Caco-2 (cell line): ENCODE measurements at regions of chr1 and their contacts with region 1.

Region 1: DNA sequence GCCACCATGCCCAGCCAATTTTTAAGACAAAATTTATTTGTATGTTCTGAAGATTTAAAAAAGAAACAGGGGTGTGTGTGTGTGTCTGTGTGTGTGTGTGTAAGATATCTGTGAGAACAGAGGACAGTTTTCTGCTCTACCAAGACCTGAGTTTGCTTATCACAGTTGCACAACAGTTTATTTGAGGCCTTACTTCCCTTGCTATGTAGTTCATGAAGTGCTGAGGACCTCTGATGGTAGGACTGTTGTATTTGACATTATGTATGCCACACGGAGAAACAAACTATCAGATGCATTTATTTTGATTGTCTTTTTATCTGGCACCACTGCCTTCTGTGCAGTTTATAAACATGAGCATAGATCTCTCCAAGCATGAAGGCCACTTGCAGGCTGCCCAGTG is 355.2 kb downstream of the PBX1 start:
- DNase-seq: peak in 1 of 2 experiments; percentile 39
- H3K4me3 ChIP-seq: no peak overlapping the region
- H3K4me3 Mint-ChIP-seq: no peak overlapping the region
- H3K27ac Mint-ChIP-seq: no peak overlapping the region
- H3K4me1 ChIP-seq: no peaks in the 10 kb centered on the region
- H3K4me1 Mint-ChIP-seq: no peaks in the 10 kb centered on the region
- H3K27me3 ChIP-seq: no peaks in the 10 kb centered on the region; the same call in 1 of the 2 replicates
- H3K27me3 Mint-ChIP-seq: peaks cover 6% of the 10 kb centered on the region
- CTCF ChIP-seq: peak; percentile 17 to 32

Region 2: DNA sequence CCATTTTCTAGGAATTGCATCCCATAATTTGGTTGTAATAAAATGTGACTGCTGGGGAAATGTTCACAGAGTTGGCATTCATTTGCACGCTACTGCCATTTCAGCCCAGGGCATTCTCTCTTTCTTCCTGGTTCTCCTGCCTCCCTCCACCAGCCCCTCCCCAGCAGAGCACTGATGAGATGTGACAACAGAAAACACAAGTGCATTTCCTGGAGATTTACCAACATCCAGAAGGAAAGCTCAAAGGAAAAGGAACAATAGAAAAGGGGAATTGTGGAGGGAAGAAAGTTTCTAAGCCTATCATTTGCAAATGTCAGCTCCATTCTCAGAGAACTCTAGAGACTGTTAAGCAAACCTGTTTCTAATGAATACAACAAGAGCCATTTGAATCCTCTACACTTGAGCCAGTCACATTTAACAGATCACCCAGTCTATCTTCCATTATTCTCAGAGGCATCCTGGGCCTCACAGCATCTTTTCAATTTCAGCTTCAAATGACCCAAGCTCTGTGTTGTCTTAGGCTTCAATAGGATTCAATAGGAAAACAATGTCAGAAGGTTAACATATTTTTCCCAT is 750.8 kb before region 1 on chr1:
- CTCF ChIA-PET with region 1: no interaction called
- POLR2A ChIA-PET with region 1: no interaction called
- intact Hi-C with region 1: loop called (anchors 5 kb)
- DNase-seq: no peak
- H3K4me3 ChIP-seq: no peak overlapping the region
- H3K4me3 Mint-ChIP-seq: no peak overlapping the region
- H3K27ac Mint-ChIP-seq: no peak overlapping the region
- H3K4me1 ChIP-seq: no peaks in the 10 kb centered on the region
- H3K4me1 Mint-ChIP-seq: no peaks in the 10 kb centered on the region
- H3K27me3 ChIP-seq: no peaks in the 10 kb centered on the region; the same call in 1 of the 2 replicates
- H3K27me3 Mint-ChIP-seq: peaks cover 15% of the 10 kb centered on the region
- CTCF ChIP-seq: no peak

Region 3: DNA sequence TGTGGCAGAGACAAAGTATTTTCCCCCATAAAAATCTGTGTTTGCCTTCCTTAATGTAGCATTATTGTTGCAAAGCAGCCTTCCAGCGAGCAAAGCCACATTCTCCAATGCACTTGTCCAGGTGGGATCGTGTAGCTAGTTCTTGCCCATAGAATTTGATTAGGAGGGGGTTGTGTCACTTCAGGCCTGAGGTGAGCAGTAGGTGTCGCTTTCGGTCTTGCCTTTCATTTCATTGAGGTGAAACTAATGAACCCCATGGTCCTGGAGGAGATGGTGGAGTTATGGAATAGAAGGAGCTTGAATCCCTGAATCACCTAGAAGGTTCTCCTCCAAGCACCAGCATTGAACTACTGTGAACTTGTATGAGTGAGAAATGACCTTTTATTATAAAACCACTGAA is 674.1 kb before region 1 on chr1:
- CTCF ChIA-PET with region 1: no interaction called
- POLR2A ChIA-PET with region 1: no interaction called
- intact Hi-C with region 1: loop called (anchors 1 kb)
- DNase-seq: peak; percentile 56 to 69
- H3K4me3 ChIP-seq: no peak overlapping the region
- H3K4me3 Mint-ChIP-seq: no peak overlapping the region
- H3K27ac Mint-ChIP-seq: no peak overlapping the region
- H3K4me1 ChIP-seq: no peaks in the 10 kb centered on the region
- H3K4me1 Mint-ChIP-seq: no peaks in the 10 kb centered on the region
- H3K27me3 ChIP-seq: no peaks in the 10 kb centered on the region
- H3K27me3 Mint-ChIP-seq: peaks cover 10% of the 10 kb centered on the region
- CTCF ChIP-seq: peak; percentile 48 to 64

Region 4: DNA sequence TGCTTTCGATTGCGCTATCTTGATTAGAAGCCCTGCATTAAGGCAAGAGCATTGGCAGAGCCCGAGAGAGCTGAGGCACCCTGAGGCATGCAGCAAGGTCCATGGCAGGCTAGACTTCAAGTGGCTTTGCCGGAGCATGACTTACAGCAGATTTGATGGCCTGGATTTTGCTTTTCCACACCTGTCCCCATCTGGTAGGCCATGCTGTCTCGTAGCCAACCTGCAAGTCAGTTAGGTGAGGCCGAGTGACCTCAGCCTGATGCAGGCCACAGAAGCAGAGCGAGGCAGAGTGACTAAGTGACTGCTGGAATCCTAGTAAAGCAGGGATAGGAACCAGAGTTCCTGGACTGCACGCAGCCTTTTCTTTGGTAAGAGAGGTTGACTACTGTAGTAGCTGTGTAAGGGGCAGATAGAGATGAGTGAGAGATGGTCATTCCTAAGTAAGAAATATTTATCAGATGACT is 206.3 kb before region 1 on chr1:
- CTCF ChIA-PET with region 1: no interaction called
- POLR2A ChIA-PET with region 1: no interaction called
- intact Hi-C with region 1: loop called (anchors 5 kb)
- DNase-seq: no peak
- H3K4me3 ChIP-seq: no peak overlapping the region
- H3K4me3 Mint-ChIP-seq: no peak overlapping the region
- H3K27ac Mint-ChIP-seq: no peak overlapping the region
- H3K4me1 ChIP-seq: peaks cover 19% of the 10 kb centered on the region
- H3K4me1 Mint-ChIP-seq: peaks cover 16% of the 10 kb centered on the region
- H3K27me3 ChIP-seq: no peaks in the 10 kb centered on the region
- H3K27me3 Mint-ChIP-seq: no peaks in the 10 kb centered on the region
- CTCF ChIP-seq: no peak

Region 5: DNA sequence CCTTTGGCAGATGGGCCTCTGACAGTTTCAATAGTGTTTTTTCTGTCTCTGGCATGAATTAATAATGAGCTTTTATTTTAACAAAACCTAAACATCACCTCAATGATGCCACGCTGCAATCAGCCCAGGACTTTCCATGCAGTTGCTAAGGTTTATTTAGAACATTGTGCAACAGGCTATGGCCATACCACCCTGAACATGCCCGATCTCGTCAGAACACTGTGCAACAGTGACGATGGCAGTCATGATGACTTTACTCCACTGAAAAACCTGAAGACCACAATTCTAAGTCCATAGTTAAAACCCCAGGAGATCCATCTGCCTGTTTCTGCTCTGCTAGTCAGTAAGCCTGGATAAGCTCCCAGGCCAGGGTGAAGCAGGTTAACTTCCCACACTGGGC is 45.2 kb before region 1 on chr1:
- CTCF ChIA-PET with region 1: no interaction called
- POLR2A ChIA-PET with region 1: no interaction called
- intact Hi-C with region 1: no loop called
- DNase-seq: no peak
- H3K4me3 ChIP-seq: no peak overlapping the region
- H3K4me3 Mint-ChIP-seq: no peak overlapping the region
- H3K27ac Mint-ChIP-seq: no peak overlapping the region
- H3K4me1 ChIP-seq: no peaks in the 10 kb centered on the region
- H3K4me1 Mint-ChIP-seq: no peaks in the 10 kb centered on the region
- H3K27me3 ChIP-seq: no peaks in the 10 kb centered on the region
- H3K27me3 Mint-ChIP-seq: no peaks in the 10 kb centered on the region
- CTCF ChIP-seq: no peak

Region 6: DNA sequence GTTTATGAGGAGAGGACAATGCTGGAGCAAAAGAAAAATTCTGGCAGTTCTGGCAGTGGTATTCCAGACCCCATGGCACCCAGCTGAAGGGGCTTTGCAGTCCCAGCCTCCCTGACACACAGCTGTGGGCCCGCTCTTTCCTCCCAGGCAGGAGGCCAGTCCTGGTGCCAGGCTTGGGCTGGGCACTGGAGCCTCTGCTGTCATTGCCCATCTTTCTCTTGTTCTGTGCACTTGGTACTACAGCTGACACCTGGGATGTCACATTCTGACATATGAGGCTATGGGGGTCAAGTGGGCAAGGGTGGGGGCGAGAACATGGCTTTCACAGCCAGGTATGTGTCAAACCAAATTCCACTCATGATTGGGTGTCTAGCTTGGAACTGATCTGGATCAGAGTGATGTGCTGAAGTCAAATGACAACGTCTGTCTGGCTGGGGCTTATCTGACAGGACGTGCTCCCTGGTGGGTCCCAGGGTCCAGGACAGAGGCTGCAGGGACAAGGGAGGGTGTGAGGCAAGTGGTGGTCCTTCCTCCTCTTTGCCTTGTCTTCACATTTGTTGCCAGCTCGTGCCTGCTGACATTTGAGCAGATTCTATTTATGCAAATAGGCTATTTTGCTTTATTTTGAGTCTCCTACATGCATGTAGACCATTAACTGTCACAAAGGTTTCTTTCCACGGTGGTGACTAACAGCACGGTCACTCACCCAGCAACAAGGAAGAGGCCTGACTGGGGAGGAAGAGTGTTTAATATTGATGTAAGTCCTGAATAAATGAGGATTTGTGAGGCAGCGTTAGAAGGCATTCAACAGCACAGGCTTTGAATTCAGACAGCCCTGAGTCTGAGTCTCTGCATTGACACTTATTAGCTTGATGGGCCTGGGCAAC is 18.9 kb before region 1 on chr1:
- CTCF ChIA-PET with region 1: no interaction called
- POLR2A ChIA-PET with region 1: no interaction called
- intact Hi-C with region 1: no loop called
- DNase-seq: no peak
- H3K4me3 ChIP-seq: no peak overlapping the region
- H3K4me3 Mint-ChIP-seq: no peak overlapping the region
- H3K27ac Mint-ChIP-seq: no peak overlapping the region
- H3K4me1 ChIP-seq: no peaks in the 10 kb centered on the region
- H3K4me1 Mint-ChIP-seq: no peaks in the 10 kb centered on the region
- H3K27me3 ChIP-seq: no peaks in the 10 kb centered on the region
- H3K27me3 Mint-ChIP-seq: peaks cover 6% of the 10 kb centered on the region
- CTCF ChIP-seq: no peak